ENCODE measurements at regions of chr14 and their contacts with region 1.

Region 1: DNA sequence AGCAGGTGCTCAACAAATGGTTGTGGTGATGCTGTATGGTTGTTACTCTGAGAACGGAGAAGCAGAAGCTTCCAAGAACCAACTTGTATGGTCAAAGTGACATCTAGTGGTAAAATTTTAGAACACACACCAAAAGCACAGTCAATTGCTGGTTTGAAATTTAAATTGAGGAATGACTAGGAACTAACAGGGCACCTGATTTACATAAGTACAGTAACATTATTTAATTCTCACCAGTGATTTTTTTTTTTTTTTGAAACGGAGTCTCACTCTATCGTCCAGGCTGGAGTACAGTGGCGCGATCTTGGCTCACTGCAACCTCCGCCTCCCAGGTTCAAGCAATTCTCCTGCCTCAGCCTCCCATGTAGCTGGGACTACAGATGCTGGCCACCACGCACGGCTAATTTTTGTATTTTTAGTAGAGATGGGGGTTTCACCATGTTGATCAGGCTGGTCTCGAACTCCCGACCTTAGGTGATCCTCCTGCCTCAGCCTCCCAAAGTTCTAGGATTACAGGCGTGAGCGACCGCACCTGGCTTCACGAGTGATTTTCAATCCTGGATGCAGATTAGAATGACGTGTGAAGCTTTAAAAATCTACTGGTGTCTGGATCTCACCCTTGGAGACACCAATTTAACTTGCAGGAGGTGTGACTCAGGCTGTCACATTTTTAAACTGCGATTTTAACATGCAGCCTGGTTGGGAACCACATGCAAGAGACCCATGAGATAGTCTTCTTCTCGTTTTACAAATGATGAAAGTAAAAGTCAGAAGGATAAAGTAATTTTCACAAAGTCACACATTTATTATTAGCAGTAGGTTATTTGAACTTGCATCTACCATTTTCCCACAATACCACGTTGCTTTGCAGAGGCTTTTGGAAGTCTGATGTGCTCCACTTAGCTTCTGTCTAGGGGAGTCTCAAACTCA is 14.1 kb upstream of the NUMB start:
- DNase-seq: peak; percentile 52 to 74
- ATAC-seq: peak; percentile 85 to 87
- H3K4me3 ChIP-seq: no peak overlapping the region
- H3K27ac ChIP-seq: no peak overlapping the region
- H3K4me1 ChIP-seq: peaks cover 15% of the 10 kb centered on the region; the same call in 1 of the 3 replicates
- CTCF ChIP-seq: peak; percentile 88
- EP300 ChIP-seq: no peak
- POLR2A ChIP-seq: no peak
- RAD21 ChIP-seq: peak; percentile 94 to 96

Region 2: DNA sequence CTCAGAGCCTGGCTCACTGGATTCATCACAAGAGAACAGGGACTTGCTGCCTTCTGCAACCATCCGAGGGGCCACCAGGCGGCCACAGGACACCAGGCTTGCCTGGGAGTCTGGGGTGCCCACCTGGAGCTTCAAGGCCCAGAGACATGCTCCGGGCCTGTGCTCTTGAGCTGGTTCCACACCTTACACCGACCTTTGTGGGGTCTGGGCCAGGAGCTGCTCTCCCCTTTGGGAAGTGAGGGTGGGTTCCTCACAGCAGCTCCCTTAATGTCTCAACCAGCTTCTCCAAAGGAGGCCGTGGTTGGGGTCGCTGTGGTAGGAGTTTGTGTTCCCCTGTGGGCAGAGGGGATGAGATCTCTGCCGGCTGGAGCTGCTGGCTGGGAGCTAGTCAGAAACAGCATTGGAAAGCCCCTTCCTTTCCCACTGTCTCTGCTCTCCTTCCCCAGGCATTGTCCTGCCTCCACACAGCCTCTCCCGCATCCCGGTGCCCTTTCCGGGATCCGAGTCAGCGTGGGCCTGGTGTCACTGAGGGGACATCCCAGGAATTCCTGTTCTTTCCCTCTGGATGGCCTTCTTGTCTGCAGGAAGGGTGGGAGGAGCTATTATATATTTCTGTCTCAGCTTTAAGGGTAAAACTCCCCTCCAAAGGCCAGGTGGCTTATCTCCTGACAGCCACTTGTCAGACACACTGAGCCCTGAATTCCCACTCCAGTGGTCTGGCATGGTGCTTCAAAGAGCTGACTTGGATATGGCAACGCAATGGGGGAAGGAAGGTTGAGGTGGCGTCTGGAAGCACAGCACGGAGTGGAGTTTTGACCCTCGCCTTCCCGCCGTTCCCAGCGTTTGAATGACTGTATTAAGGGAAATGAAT is 240.2 kb before region 1 on chr14:
- CTCF ChIA-PET with region 1: interaction called, 28 read pairs
- POLR2A ChIA-PET with region 1: no interaction called
- DNase-seq: peak; percentile 73
- ATAC-seq: peak; percentile 52 to 70
- H3K4me3 ChIP-seq: no peak overlapping the region
- H3K27ac ChIP-seq: peak overlapping the region in 1 of 2 experiments; percentile 76; a peak in 4 of 6 replicates
- H3K4me1 ChIP-seq: peaks cover 61% of the 10 kb centered on the region
- CTCF ChIP-seq: peak; percentile 46
- EP300 ChIP-seq: no peak
- POLR2A ChIP-seq: no peak
- RAD21 ChIP-seq: peak; percentile 59 to 67

Region 3: GRCh38 chr14:73269729-73270531 is 202.5 kb before region 1 on chr14:
- CTCF ChIA-PET with region 1: interaction called, 15 read pairs
- POLR2A ChIA-PET with region 1: no interaction called
- DNase-seq: no peak
- ATAC-seq: no peak
- H3K4me3 ChIP-seq: no peak overlapping the region
- H3K27ac ChIP-seq: no peak overlapping the region
- H3K4me1 ChIP-seq: no peaks in the 10 kb centered on the region
- CTCF ChIP-seq: no peak
- EP300 ChIP-seq: no peak
- POLR2A ChIP-seq: no peak
- RAD21 ChIP-seq: no peak

Region 4: DNA sequence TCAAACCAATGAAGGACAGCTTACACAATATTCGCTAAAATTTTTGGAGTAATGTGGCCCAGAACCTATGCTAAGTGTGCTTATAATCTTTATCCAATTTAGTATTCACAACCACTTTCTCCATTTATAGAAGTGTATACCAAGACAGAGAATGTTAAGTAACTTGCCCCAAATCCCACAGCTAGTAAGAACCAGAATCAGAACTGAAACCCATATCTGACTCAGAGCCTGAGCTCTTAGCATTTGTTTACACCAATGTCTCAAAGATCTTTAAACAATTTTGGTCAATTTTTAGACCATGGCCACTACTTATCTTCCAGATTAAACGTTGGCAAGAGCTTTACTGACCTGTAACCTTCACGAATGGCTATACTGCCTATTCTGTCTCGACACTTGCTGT is 182.2 kb before region 1 on chr14:
- CTCF ChIA-PET with region 1: interaction called, 176 read pairs
- POLR2A ChIA-PET with region 1: interaction called, 8 read pairs
- DNase-seq: no peak
- ATAC-seq: no peak
- H3K4me3 ChIP-seq: no peak overlapping the region
- H3K27ac ChIP-seq: no peak overlapping the region
- H3K4me1 ChIP-seq: peaks cover under 1% of the 10 kb centered on the region
- CTCF ChIP-seq: no peak
- EP300 ChIP-seq: no peak
- POLR2A ChIP-seq: no peak
- RAD21 ChIP-seq: no peak

Region 5: GRCh38 chr14:73311708-73312030 is 160.8 kb before region 1 on chr14:
- CTCF ChIA-PET with region 1: interaction called, 10 read pairs
- POLR2A ChIA-PET with region 1: no interaction called
- DNase-seq: no peak
- ATAC-seq: no peak; a peak in 1 of 6 replicates
- H3K4me3 ChIP-seq: no peak overlapping the region
- H3K27ac ChIP-seq: peak overlapping the region in 1 of 2 experiments; percentile 71; a peak in 2 of 6 replicates
- H3K4me1 ChIP-seq: peaks cover 13% of the 10 kb centered on the region; the same call in 2 of the 3 replicates
- CTCF ChIP-seq: no peak
- EP300 ChIP-seq: no peak
- POLR2A ChIP-seq: no peak
- RAD21 ChIP-seq: no peak

Region 6: GRCh38 chr14:73443758-73444157 is 28.7 kb before region 1 on chr14:
- CTCF ChIA-PET with region 1: interaction called, 11 read pairs
- POLR2A ChIA-PET with region 1: no interaction called
- DNase-seq: no peak
- ATAC-seq: no peak
- H3K4me3 ChIP-seq: no peak overlapping the region
- H3K27ac ChIP-seq: no peak overlapping the region
- H3K4me1 ChIP-seq: peaks cover 16% of the 10 kb centered on the region; the same call in 2 of the 3 replicates
- CTCF ChIP-seq: no peak
- EP300 ChIP-seq: no peak
- POLR2A ChIP-seq: no peak
- RAD21 ChIP-seq: no peak

Region 7: GRCh38 chr14:73458151-73458976 is 14.1 kb before region 1 on chr14 and contains the start of gene NUMB:
- CTCF ChIA-PET with region 1: interaction called, 104 read pairs
- POLR2A ChIA-PET with region 1: interaction called, 3 read pairs
- DNase-seq: peak; percentile 99 to 100
- ATAC-seq: peak; percentile 91 to 94
- H3K4me3 ChIP-seq: peak within 1 kb of the TSS; percentile 89
- H3K27ac ChIP-seq: peak within 1 kb of the TSS; percentile 91 to 95
- H3K4me1 ChIP-seq: peaks cover 70% of the 10 kb centered on the region
- CTCF ChIP-seq: no peak
- EP300 ChIP-seq: no peak
- POLR2A ChIP-seq: peak; percentile 68
- RAD21 ChIP-seq: no peak
- polyA plus RNA-seq, gene NUMB: 134 and 151 TPM in 2 replicates

Region 8: GRCh38 chr14:73526569-73526968 is 54.1 kb after region 1 on chr14:
- CTCF ChIA-PET with region 1: no interaction called
- POLR2A ChIA-PET with region 1: no interaction called
- DNase-seq: no peak
- ATAC-seq: peak; percentile 47 to 49; a peak in 5 of 6 replicates
- H3K4me3 ChIP-seq: no peak overlapping the region
- H3K27ac ChIP-seq: 0 out of 6 replicates have a peak overlapping the region, but pooled peaks of 1 of the 2 experiments have one; percentile 14
- H3K4me1 ChIP-seq: peaks cover 9% of the 10 kb centered on the region; the same call in 1 of the 3 replicates
- CTCF ChIP-seq: no peak
- EP300 ChIP-seq: no peak
- POLR2A ChIP-seq: no peak
- RAD21 ChIP-seq: no peak

Measured in A549 (cell line).